HEK293T (cell line): ENCODE measurements at regions of chr19 and their contacts with region 1.

Region 1: DNA sequence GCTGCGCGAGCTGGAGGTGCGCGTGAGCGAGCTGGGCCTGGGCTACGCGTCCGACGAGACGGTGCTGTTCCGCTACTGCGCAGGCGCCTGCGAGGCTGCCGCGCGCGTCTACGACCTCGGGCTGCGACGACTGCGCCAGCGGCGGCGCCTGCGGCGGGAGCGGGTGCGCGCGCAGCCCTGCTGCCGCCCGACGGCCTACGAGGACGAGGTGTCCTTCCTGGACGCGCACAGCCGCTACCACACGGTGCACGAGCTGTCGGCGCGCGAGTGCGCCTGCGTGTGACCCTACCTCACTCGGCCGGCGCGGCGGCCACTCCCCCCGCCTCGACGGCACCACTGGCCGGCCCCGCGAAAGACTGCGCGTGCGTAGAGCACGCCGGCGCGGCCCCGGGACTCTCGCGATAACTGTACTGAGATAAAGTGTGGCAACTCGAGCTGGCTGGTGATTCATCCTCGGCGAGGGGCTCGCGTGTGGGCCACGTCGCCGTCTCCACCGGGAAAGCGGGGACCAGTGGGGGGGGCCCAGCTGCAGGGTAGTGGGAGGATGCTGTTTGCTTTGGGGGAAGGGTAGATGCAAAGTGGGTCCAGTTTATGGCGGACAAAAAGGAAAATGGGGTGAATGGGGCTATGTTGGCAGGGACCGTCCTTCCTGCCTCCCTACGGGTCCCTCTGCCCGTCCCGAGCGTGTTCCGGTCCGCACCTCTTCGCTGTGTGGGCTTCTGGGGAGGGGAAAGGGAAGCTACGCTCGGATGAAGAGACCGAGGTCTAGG is 11.4 kb downstream of the FUT6 start:
- DNase-seq: peak; percentile 98

Region 2: GRCh38 chr19:5775668-5776309 is 52.3 kb before region 1 on chr19:
- CTCF ChIA-PET with region 1: no interaction called
- POLR2A ChIA-PET with region 1: no interaction called
- DNase-seq: no peak

Region 3: GRCh38 chr19:5790573-5791520 is 37.2 kb before region 1 on chr19 and contains the start of gene DUS3L:
- CTCF ChIA-PET with region 1: no interaction called
- POLR2A ChIA-PET with region 1: interaction called, 14 read pairs
- DNase-seq: peak; percentile 96

Region 4: DNA sequence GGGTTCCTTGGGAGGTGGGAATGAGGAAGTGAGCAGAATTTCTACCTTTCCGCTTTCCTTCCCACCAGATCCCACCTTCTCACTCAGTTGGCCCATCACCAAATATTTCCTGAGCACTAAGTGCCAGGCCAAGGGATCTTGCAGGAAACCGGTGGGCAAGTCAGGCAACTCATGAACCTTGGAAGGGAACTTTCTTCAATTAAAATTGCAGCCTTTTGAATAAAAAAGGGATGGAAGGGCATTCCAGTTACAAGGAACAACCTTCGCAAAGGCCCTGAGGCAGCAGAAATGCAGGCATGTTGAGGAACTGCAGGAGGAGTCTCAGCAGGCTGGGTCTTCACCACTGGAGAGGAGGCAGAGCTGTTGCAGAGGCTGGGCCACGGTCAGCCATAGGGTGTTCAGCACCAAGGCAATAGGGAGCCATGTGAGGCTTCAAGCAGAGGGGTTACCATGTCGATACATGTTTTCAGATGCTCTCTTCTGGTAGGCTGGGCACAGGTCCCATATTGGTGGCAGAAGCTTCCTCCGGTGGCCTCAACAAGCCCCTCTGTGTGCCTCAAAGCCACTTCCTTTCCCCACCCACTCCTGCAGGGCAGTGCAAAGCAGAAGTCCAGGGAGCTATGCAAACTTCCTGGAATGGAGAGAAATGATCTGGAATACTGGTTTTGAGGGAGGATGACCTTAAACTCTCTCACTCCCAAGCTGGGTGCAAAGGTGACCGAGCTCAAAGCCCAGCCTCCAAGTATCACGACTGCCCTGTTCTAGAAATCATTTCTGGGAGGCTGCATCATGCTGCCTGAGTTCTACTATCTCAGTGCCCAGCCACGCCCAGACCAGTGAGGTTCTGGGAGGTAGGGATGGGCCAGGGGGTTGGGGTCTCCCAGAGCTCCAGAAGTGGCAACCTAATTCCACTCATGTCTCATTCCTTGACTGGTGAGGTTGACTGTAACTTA is 11.3 kb after region 1 on chr19 and contains the start of gene FUT6:
- CTCF ChIA-PET with region 1: no interaction called
- POLR2A ChIA-PET with region 1: interaction called, 17 read pairs
- DNase-seq: no peak

Region 5: GRCh38 chr19:5891938-5892771 is 64.1 kb after region 1 on chr19:
- CTCF ChIA-PET with region 1: interaction called, 3 read pairs
- POLR2A ChIA-PET with region 1: interaction called, 17 read pairs
- DNase-seq: peak; percentile 56

Region 6: DNA sequence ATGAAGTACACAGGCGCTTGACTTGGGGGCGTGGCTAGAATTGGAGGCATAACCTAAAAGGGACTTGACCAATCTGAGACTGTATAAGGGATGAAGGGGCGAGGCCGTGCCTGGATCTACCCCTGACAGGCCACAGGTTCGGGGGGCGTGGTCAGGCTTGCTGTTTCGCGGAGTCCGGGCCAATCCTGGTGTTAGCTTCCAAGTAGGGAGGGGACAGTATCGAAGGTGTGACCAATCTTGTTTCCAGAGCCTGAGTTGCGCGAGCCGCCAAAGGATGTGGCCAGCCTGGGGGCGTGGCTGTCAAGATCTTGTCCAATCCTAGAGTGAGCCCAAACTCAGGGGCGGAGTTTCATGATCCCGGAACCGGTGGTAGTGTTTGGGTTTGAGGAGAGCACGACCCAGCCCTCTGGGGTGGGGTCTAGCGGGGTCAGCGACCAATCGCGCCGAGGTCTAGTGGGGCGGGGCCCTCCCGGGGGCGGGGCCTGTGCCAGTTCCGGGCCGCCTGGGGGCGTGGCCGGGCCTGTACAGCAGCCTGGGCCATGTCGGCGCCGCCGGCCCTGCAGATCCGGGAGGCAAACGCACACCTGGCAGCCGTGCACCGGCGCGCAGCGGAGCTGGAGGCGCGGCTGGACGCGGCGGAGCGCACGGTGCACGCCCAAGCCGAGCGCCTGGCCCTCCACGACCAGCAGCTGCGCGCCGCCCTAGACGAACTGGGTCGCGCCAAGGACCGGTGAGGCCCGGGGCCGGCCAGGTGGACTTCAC is 76.5 kb after region 1 on chr19 and contains the start of gene VMAC:
- CTCF ChIA-PET with region 1: no interaction called
- POLR2A ChIA-PET with region 1: interaction called, 32 read pairs
- DNase-seq: peak; percentile 96